AG04450 (cell line): ENCODE measurements at regions of chr2 and their contacts with region 1.

Region 1: DNA sequence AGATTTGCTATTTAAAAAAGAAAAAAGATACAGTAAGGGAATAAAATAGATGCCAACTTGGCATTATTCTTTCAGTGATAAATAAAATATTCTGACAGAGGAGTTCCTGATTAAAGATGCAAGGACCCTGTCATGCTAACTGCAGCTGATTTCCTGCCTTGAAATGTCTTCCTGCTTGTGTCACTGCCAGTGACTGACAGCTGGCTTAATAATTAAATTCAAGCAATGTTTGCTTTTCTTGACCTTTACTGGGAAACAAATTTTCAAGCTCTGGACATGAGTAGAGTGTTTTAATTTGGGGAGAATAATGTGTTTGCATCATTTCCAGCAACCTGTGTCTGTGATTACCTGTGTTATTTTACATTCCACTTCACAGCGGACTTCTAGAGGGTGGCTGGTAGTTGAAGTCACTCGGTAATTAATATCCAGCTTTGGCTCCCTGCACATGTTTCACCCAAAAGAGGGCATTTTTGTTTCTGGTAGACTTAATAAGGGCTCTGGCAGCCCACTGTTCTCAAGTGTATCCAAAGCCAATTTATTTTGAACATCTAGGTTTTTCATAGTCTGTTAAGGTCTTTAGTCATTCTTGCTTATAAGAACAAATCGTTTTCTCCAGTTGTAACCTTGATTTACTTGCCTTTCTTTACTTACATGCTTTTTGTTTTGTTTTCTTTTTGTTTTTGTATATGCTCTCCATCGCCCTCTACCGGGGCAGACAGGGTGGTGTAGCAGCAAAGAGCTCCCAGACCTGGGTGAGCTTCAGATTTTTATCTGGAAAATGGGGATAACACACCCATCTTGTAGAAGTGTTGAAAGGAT is 48.5 kb upstream of the PROKR1 start:
- DNase-seq: peak; percentile 3
- H3K4me3 ChIP-seq: no peak overlapping the region
- H3K27ac ChIP-seq: no peak overlapping the region
- H3K27me3 ChIP-seq: peaks cover 6% of the 10 kb centered on the region
- CTCF ChIP-seq: peak; percentile 92

Region 2: GRCh38 chr2:68423966-68424650 is 170.8 kb before region 1 on chr2:
- CTCF ChIA-PET with region 1: no interaction called
- POLR2A ChIA-PET with region 1: no interaction called
- DNase-seq: no peak
- H3K4me3 ChIP-seq: no peak overlapping the region
- H3K27ac ChIP-seq: no peak overlapping the region
- H3K27me3 ChIP-seq: peaks cover 1% of the 10 kb centered on the region
- CTCF ChIP-seq: no peak

Region 3: DNA sequence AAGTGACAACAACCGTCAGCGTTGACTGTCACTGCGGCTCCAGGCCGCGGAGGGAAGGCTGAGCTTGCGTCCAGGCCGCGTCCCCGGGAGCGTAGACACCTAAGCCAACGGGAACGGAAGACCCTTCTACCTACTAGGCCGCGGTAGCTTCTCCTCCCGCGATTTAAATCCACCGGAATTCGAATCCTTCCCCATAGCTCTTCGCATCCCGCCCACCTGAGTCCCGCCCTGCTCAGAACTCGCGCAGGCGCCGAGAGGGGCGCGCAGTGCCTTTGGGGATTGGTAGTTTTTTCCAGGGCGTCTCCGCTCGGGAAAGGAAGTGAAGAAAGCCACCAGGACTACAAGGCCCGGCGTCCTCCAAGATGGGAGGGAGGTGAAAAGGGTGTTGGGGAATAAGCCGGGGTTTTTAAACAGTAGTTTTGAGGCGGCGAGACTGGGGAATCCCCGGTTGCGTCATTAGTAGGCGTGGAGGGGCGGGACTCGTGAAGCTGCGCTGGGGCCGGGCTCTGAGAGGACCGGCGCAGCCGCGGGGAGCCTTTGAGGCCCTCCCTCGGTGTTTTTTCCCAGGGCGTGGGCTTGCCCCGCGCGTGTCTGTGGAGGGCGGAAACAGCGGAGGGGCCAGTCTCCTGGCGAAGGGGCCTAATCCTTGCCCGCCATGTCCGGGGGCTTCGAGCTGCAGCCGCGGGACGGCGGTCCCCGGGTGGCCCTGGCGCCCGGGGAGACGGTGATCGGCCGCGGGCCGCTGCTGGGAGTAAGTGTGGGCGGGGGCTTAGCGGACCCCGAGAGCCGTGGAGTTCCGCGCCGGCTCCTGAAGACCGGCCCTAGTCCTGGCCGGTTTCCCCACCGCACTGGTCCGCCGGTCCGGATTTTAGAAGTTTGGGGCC is 127.6 kb before region 1 on chr2 and contains the starts of genes APLF and FBXO48:
- CTCF ChIA-PET with region 1: interaction called, 109 read pairs
- POLR2A ChIA-PET with region 1: no interaction called
- DNase-seq: peak; percentile 97
- H3K4me3 ChIP-seq: peak within 1 kb of the TSS; percentile 98
- H3K27ac ChIP-seq: peak within 1 kb of the TSS; percentile 77
- H3K27me3 ChIP-seq: no peaks in the 10 kb centered on the region
- CTCF ChIP-seq: no peak
- polyA plus RNA-seq, gene APLF: 2.5 and 3.6 TPM in 2 replicates
- polyA plus RNA-seq, gene FBXO48: 0.66 and 0.89 TPM in 2 replicates

Region 4: DNA sequence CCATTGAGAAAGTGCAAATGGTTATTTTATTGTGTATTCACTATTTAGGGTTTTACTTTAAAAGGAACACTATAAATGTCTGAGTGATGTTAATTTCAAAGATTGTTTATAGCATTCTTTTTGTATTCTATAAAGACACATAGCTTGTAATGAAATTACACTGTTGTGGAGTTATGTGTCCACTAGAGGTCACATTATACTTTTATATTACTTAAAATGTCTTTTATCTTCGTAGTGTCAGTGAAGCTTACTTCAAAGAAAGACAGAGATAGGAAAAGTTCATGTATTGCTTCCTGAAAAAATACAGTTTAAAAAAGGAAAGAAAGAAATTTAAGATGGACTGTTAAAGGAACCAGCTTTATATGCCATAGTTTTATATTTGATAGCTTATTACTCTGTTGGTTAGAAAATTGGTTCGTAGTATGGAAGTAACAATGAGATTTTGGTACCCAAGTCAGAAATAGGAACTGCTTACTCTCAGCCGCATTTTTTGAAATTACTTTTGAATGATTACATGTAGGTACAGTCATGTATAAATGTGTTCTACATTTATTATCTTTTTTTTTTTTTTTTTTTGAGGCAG is 107.0 kb before region 1 on chr2:
- CTCF ChIA-PET with region 1: interaction called, 86 read pairs
- POLR2A ChIA-PET with region 1: no interaction called
- DNase-seq: no peak
- H3K4me3 ChIP-seq: no peak overlapping the region
- H3K27ac ChIP-seq: no peak overlapping the region
- H3K27me3 ChIP-seq: no peaks in the 10 kb centered on the region
- CTCF ChIP-seq: peak; percentile 49

Region 5: DNA sequence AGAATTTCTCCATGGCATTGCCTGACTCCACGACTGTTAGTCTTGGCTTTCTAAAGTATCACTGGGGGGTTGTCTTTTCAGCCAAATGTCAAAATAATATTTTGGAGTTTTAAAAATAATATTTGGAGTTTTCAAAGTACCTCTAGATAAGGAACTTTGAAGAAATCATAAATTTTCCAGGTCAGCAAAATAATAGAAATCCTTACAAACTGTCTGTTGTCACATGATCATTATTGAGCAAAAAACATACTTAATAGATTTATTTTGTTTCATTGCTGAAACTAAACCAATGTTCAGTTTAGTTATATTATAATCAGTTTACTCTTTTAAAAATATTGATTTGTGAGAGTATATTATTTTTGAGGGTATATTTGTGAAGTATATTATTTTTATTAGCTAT is 41.8 kb before region 1 on chr2:
- CTCF ChIA-PET with region 1: interaction called, 13 read pairs
- POLR2A ChIA-PET with region 1: no interaction called
- DNase-seq: no peak
- H3K4me3 ChIP-seq: no peak overlapping the region
- H3K27ac ChIP-seq: no peak overlapping the region
- H3K27me3 ChIP-seq: no peaks in the 10 kb centered on the region
- CTCF ChIP-seq: no peak

Region 6: GRCh38 chr2:68577183-68577582 is 17.7 kb before region 1 on chr2:
- CTCF ChIA-PET with region 1: interaction called, 16 read pairs
- POLR2A ChIA-PET with region 1: no interaction called
- DNase-seq: no peak
- H3K4me3 ChIP-seq: no peak overlapping the region
- H3K27ac ChIP-seq: no peak overlapping the region
- H3K27me3 ChIP-seq: no peaks in the 10 kb centered on the region
- CTCF ChIP-seq: no peak

Region 7: GRCh38 chr2:68605939-68606338 is 11.1 kb after region 1 on chr2:
- CTCF ChIA-PET with region 1: interaction called, 17 read pairs
- POLR2A ChIA-PET with region 1: no interaction called
- DNase-seq: no peak
- H3K4me3 ChIP-seq: no peak overlapping the region
- H3K27ac ChIP-seq: no peak overlapping the region
- H3K27me3 ChIP-seq: no peaks in the 10 kb centered on the region
- CTCF ChIP-seq: no peak